ENCODE measurements at regions of chr15 and their contacts with region 1.

Region 1: DNA sequence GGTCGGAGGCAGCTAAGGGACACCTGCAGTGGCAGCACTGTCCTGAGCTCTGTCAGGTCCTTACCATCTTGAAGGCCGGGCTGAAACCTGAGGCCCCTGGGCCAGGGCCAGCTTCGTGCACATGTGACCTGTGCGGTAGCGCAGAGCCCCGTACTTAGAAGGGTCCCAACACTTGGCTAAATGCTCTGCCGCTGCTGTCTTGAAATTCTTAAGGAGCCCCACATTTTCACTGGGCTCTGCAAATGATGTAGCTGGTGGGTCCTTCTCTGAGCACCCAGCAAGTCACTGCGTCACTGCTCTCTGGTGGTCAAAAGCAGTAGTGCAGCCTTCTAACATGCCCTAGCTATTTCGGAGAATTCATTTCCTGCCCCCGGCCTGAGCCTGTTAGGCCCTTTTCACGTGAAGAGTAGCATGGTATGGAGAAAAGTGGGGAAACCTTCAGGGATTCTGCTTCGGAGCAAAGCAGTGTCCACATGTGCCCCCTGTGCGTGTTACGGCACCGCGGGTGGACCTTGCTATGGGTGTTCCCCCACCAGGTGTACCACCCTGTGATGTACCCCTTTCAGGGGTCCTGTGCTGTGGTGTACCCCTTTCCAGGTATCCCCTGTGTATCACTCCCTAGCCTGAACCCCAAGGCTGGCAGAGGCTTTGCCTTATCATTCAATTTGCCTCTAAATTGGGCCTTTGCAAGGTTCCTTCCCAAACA is 79.7 kb downstream of the TMEM266 start:
- DNase-seq: peak; percentile 89
- ATAC-seq: peak; percentile 91
- H3K4me3 Mint-ChIP-seq: no peak overlapping the region
- H3K27ac Mint-ChIP-seq: no peak overlapping the region
- H3K4me1 Mint-ChIP-seq: peaks cover 24% of the 10 kb centered on the region
- H3K27me3 Mint-ChIP-seq: peaks cover 56% of the 10 kb centered on the region

Region 2: GRCh38 chr15:75327005-75327404 is 812.5 kb before region 1 on chr15:
- CTCF ChIA-PET with region 1: no interaction called
- DNase-seq: no peak
- ATAC-seq: no peak
- H3K4me3 Mint-ChIP-seq: no peak overlapping the region
- H3K27ac Mint-ChIP-seq: no peak overlapping the region
- H3K4me1 Mint-ChIP-seq: no peaks in the 10 kb centered on the region
- H3K27me3 Mint-ChIP-seq: peaks cover 6% of the 10 kb centered on the region

Region 3: GRCh38 chr15:75809986-75810750 is 329.4 kb before region 1 on chr15:
- CTCF ChIA-PET with region 1: interaction called, 23 read pairs
- DNase-seq: no peak
- ATAC-seq: peak; percentile 53
- H3K4me3 Mint-ChIP-seq: no peak overlapping the region
- H3K27ac Mint-ChIP-seq: no peak overlapping the region
- H3K4me1 Mint-ChIP-seq: peaks cover 2% of the 10 kb centered on the region
- H3K27me3 Mint-ChIP-seq: peaks cover 11% of the 10 kb centered on the region

Region 4: GRCh38 chr15:76057332-76058000 is 82.1 kb before region 1 on chr15:
- CTCF ChIA-PET with region 1: interaction called, 188 read pairs
- DNase-seq: peak; percentile 47
- ATAC-seq: no peak
- H3K4me3 Mint-ChIP-seq: no peak overlapping the region
- H3K27ac Mint-ChIP-seq: no peak overlapping the region
- H3K4me1 Mint-ChIP-seq: peaks cover 25% of the 10 kb centered on the region
- H3K27me3 Mint-ChIP-seq: peaks cover 67% of the 10 kb centered on the region

Region 5: GRCh38 chr15:76065267-76065666 is 74.3 kb before region 1 on chr15:
- CTCF ChIA-PET with region 1: interaction called, 188 read pairs
- DNase-seq: peak; percentile 70
- ATAC-seq: peak; percentile 89
- H3K4me3 Mint-ChIP-seq: no peak overlapping the region
- H3K27ac Mint-ChIP-seq: no peak overlapping the region
- H3K4me1 Mint-ChIP-seq: peaks cover 19% of the 10 kb centered on the region
- H3K27me3 Mint-ChIP-seq: peaks cover 66% of the 10 kb centered on the region

Region 6: DNA sequence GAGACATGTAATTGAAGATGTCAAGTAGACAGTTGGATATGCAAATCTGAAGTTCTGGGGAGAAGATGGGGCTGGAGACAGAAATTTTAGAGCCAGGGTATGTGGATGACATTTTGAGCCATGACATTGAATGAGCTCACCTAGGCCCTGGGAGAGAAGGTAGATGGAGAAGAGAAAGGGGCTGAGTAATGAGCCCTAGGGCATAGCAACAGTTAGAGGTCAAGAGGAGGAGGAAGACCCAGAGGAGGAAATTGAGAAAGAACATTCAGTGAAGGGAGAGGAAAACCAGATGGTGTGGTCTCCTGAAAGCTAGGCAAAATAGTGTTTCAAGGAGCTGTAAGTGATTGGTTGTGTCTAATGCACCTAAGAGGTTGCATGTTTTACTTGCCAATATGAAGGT is 64.4 kb before region 1 on chr15:
- CTCF ChIA-PET with region 1: interaction called, 12 read pairs
- DNase-seq: no peak
- ATAC-seq: no peak
- H3K4me3 Mint-ChIP-seq: no peak overlapping the region
- H3K27ac Mint-ChIP-seq: no peak overlapping the region
- H3K4me1 Mint-ChIP-seq: peaks cover 12% of the 10 kb centered on the region
- H3K27me3 Mint-ChIP-seq: peaks cover 6% of the 10 kb centered on the region

Region 7: GRCh38 chr15:76150971-76151598 is 11.6 kb after region 1 on chr15:
- CTCF ChIA-PET with region 1: interaction called, 82 read pairs
- DNase-seq: peak; percentile 83
- ATAC-seq: peak; percentile 94
- H3K4me3 Mint-ChIP-seq: no peak overlapping the region
- H3K27ac Mint-ChIP-seq: no peak overlapping the region
- H3K4me1 Mint-ChIP-seq: peaks cover 16% of the 10 kb centered on the region
- H3K27me3 Mint-ChIP-seq: peaks cover 20% of the 10 kb centered on the region

Region 8: DNA sequence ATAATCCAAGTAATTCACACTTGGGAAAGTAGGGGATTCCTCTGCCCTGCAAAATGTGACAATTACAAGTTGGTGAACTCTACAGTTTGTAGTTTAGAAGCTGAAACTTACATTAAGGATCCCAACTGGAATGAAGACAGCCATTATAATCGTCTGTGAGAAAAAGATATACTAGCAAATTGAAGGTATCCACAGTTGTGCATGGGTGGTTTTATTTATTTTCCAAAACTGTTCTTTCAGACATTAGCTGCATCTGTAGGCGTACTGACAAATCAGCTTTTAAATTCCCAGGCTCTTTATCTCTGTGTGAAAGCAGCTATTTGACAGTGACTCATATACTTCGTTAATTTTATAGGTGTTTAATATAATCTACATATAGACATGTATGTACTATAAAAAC is 184.5 kb after region 1 on chr15:
- CTCF ChIA-PET with region 1: no interaction called
- DNase-seq: no peak
- ATAC-seq: no peak
- H3K4me3 Mint-ChIP-seq: no peak overlapping the region
- H3K27ac Mint-ChIP-seq: no peak overlapping the region
- H3K4me1 Mint-ChIP-seq: peaks cover 2% of the 10 kb centered on the region
- H3K27me3 Mint-ChIP-seq: peaks cover 71% of the 10 kb centered on the region

Region 9: DNA sequence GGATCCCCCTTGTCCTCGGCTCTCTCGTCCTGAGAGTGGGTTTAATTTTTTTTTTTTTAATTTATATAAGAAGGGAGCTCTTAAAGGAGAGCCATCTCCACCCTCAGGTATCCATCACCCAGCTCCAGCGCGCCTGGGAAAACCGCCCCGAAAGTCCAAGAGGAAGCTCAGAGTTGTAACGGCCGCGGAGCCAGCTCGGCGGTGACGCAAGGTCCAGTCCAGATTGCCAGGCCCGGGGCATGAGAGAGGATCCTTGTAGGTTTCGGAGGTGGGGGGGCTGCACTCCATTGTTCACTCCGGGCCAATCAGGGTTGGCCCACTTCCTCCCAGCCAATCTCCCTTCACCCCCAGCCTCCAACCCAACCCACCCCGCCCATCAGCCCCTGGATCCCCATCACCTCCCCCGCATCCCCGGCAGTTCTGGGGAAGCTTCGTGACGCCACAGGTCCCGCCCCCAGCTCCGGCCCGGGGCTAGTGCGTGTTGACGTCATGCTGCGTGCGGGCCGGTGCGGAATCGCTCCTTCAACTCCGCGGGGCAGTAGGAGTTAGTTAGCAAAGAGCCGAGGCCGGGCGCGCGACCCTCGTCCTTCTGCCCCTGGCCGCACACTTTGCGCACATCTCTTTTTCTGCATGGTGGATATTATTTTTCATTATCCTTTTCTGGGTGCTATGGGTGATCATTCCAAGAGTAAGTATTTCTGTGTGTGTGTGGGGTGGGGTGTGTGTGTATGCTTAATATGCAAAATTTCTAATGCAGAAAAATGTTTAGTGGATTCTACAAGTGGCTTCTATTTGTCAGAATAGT is 196.9 kb after region 1 on chr15 and contains the start of gene ISL2:
- CTCF ChIA-PET with region 1: no interaction called
- DNase-seq: peak; percentile 94
- ATAC-seq: peak; percentile 77
- H3K4me3 Mint-ChIP-seq: peak within 1 kb of the TSS; percentile 76
- H3K27ac Mint-ChIP-seq: peak within 1 kb of the TSS; percentile 88
- H3K4me1 Mint-ChIP-seq: peaks cover 54% of the 10 kb centered on the region
- H3K27me3 Mint-ChIP-seq: peaks cover 57% of the 10 kb centered on the region
- total RNA-seq, gene ISL2: 2.4 to 3.2 TPM